A673 (cell line): ENCODE measurements at regions of chr19 and their contacts with region 1.

Region 1: DNA sequence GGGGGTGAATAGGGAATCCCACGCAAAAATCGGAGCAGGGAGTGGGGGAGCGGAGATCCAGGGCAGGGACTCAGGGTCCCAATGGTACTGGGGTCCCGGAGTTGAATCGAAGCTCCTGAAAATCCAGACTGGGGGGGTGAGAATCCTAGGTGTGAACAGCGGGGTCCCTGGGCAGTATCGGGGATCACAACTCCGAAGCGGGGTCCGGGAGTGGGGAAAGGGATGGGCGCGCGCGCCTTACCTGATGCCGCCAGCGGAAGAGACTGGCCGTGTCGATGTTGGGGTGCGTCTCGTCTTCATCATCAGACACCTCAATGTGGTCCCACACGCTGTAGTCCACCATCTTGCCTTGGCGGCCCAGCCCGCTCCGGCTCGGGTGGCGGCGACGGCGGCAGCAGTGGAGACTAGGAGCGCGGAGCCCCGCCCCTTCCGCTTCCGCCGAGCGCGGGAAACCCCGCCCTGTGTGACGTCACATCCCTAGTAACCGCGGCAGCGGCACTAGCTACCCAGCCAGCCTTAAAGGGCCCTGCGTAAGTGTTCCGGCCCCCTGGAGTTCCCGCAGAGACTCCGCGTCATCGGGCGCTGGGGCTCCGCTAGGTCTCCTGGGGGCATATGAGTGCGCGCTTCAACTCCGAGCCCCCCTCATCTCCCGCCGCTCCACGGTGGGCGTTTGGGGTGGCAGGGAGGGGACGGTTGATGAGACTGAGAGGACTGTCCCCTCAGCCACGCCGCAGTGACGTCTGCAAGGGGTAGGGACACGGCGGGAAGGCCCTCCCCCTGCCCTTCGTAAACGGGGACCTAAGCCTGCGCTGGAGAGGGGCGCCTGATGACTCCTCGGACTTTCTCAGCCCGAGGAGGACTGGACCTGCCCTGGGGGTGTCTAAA is at the start of gene CDC37:
- DNase-seq: peak; percentile 98
- H3K4me3 ChIP-seq: peak within 1 kb of the TSS; percentile 72
- H3K27ac ChIP-seq: peak within 1 kb of the TSS; percentile 89
- H3K4me1 ChIP-seq: peaks cover 18% of the 10 kb centered on the region
- H3K27me3 ChIP-seq: no peaks in the 10 kb centered on the region
- CTCF ChIP-seq: no peak
- total RNA-seq, gene CDC37: 272 and 288 TPM in 2 replicates

Region 2: GRCh38 chr19:10388957-10389356 is 14.4 kb before region 1 on chr19:
- CTCF ChIA-PET with region 1: interaction called, 11 read pairs
- POLR2A ChIA-PET with region 1: no interaction called
- intact Hi-C with region 1: no loop called
- DNase-seq: peak; percentile 86
- H3K4me3 ChIP-seq: no peak overlapping the region
- H3K27ac ChIP-seq: no peak overlapping the region
- H3K4me1 ChIP-seq: no peaks in the 10 kb centered on the region
- H3K27me3 ChIP-seq: no peaks in the 10 kb centered on the region
- CTCF ChIP-seq: peak; percentile 97

Region 3: DNA sequence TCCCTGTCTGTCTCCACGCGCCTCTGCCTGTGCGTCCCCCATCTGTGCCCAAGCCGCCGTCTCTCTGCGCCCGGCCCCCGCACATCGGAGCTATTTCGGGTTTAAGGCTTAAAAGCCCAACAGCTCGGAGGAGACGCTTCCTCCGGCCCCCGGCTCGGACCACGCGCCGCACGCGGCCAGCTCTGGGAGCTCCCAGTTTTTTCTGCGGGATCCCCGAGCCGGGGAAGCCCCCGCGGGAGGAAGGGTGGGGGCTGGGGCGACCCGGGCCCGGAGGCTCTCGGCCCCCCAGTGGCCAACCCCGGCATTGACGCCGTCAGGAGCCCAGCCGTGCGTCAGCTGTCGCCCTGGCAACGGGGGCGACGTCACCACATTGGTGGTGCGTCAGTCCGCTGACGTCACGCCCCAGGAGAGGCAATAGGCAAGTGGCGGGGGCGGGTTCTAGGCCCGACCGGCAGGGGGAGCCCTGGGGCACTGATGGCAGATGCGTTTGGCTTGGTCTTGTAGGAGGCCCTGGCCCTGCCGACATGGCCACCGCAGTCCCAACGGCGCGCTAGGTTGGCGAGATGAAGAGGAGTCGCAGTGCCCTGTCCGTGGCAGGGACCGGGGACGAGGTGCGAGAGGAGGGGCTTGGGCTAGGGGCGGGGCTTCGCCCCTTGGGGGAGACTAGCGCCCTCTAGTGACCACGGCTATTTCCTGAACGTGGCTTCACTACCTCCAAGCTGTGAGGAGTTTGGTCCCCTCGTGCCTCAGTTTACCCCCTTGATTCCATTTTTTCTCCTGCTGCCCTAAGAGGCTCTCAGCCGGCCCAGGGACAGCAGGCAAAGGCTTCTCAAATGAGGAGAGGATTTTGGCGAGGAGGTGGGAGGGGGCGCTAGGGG is 13.2 kb after region 1 on chr19:
- CTCF ChIA-PET with region 1: interaction called, 34 read pairs
- POLR2A ChIA-PET with region 1: interaction called, 22 read pairs
- intact Hi-C with region 1: loop called (anchors 2 kb)
- DNase-seq: peak; percentile 92
- H3K4me3 ChIP-seq: peak overlapping the region; percentile 54
- H3K27ac ChIP-seq: peak overlapping the region; percentile 77
- H3K4me1 ChIP-seq: peaks cover 27% of the 10 kb centered on the region
- H3K27me3 ChIP-seq: no peaks in the 10 kb centered on the region
- CTCF ChIP-seq: peak; percentile 86

Region 4: GRCh38 chr19:10653715-10654492 is 250.5 kb after region 1 on chr19 and contains the start of gene ILF3:
- CTCF ChIA-PET with region 1: no interaction called
- POLR2A ChIA-PET with region 1: no interaction called
- intact Hi-C with region 1: loop called (anchors 10 kb)
- DNase-seq: peak; percentile 100
- H3K4me3 ChIP-seq: peak within 1 kb of the TSS; percentile 100
- H3K27ac ChIP-seq: peak within 1 kb of the TSS; percentile 100
- H3K4me1 ChIP-seq: peaks cover 22% of the 10 kb centered on the region
- H3K27me3 ChIP-seq: no peaks in the 10 kb centered on the region
- CTCF ChIP-seq: no peak
- total RNA-seq, gene ILF3: 665 and 683 TPM in 2 replicates